H1 (cell line): ENCODE measurements at regions of chr15 and their contacts with region 1.

Region 1: GRCh38 chr15:48324914-48325313 is 6.3 kb upstream of the DUT start:
- DNase-seq: no peak
- H3K4me3 ChIP-seq: no peak overlapping the region
- H3K27ac ChIP-seq: no peak overlapping the region
- H3K4me1 ChIP-seq: 0 out of 7 replicates have a peak, but pooled peaks cover 0 to 3% (median 0%) of the 10 kb centered on the region in 4 experiments
- H3K27me3 ChIP-seq: no peaks in the 10 kb centered on the region
- CTCF ChIP-seq: no peak
- EP300 ChIP-seq: no peak
- POLR2A ChIP-seq: no peak
- RAD21 ChIP-seq: no peak

Region 2: DNA sequence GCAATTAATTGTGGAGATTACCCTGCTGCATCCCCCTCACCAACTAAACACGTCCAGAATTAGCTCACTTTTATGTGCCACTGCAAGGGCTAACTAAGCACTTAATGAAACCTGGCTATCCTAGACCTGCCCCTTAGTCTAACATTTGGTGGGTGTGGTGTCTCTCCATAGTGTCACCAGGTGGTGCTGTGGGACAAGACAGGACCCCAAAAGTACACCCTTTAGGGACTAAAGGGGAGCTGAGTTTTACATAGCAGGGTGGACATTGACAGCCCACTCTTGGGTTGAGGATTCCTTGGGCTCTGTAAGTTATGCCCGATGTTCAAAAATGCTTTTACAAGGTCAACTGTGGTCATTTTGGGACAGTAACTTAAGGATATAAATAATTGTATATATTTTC is 12.0 kb after region 1 on chr15:
- CTCF ChIA-PET with region 1: interaction called, 23 read pairs
- POLR2A ChIA-PET with region 1: interaction called, 11 read pairs
- DNase-seq: no peak
- H3K4me3 ChIP-seq: no peak overlapping the region
- H3K27ac ChIP-seq: no peak overlapping the region
- H3K4me1 ChIP-seq: peaks cover 3 to 9% (median 3%) of the 10 kb centered on the region in 4 experiments; a peak in 5 of 7 replicates
- H3K27me3 ChIP-seq: no peaks in the 10 kb centered on the region
- CTCF ChIP-seq: peak; percentile 56 to 75 (median 61)
- EP300 ChIP-seq: no peak
- POLR2A ChIP-seq: no peak
- RAD21 ChIP-seq: peak; percentile 65 to 78

Region 3: GRCh38 chr15:48458876-48459275 is 134.0 kb after region 1 on chr15:
- CTCF ChIA-PET with region 1: no interaction called
- POLR2A ChIA-PET with region 1: no interaction called
- DNase-seq: no peak
- H3K4me3 ChIP-seq: no peak overlapping the region
- H3K27ac ChIP-seq: no peak overlapping the region
- H3K4me1 ChIP-seq: no peaks in the 10 kb centered on the region
- H3K27me3 ChIP-seq: no peaks in the 10 kb centered on the region
- CTCF ChIP-seq: no peak
- EP300 ChIP-seq: no peak
- POLR2A ChIP-seq: no peak
- RAD21 ChIP-seq: no peak